ENCODE measurements at regions of chr11 and their contacts with region 1.

Region 1: GRCh38 chr11:123741159-123742028 is at the start of gene ZNF202:
- DNase-seq: peak; percentile 91
- H3K4me3 ChIP-seq: peak within 1 kb of the TSS; percentile 58 to 89 (median 64)
- H3K27ac ChIP-seq: peak within 1 kb of the TSS; percentile 10
- H3K4me1 ChIP-seq: peaks cover 14% of the 10 kb centered on the region
- H3K27me3 ChIP-seq: peaks cover 0 to under 1% of the 10 kb centered on the region in 2 experiments
- CTCF ChIP-seq: peak in 1 of 2 donors; percentile 0
- POLR2A ChIP-seq: peak; percentile 81
- total RNA-seq, gene ZNF202: 12.3 and 13.1 TPM in 2 replicates

Region 2: DNA sequence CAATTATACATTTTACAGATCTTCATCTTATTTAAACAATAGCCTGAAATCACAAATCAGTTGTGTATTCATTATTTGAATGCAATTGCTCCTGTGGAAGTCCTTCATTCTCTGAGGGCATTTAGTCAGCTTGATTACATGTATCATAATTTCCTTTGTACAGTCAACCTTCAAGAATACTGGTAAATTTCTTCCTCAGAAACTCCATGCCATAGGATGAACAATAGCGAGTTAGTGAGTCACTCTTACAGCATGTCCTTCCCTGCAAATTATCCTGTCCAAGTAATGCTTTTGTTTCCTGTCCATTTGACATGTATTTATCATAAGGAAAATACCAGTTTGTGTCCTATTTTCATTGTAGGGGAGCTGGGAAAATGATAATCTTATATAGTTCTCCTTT is 232.4 kb after region 1 on chr11:
- CTCF ChIA-PET with region 1: no interaction called
- POLR2A ChIA-PET with region 1: no interaction called
- dilution Hi-C with region 1: no loop called
- intact Hi-C with region 1: loop called (anchors 2 kb)
- DNase-seq: peak; percentile 96
- H3K4me3 ChIP-seq: no peak overlapping the region
- H3K27ac ChIP-seq: peak overlapping the region; percentile 93
- H3K4me1 ChIP-seq: peaks cover 24% of the 10 kb centered on the region
- H3K27me3 ChIP-seq: no peaks in the 10 kb centered on the region
- CTCF ChIP-seq: no peak
- POLR2A ChIP-seq: peak; percentile 54

Region 3: DNA sequence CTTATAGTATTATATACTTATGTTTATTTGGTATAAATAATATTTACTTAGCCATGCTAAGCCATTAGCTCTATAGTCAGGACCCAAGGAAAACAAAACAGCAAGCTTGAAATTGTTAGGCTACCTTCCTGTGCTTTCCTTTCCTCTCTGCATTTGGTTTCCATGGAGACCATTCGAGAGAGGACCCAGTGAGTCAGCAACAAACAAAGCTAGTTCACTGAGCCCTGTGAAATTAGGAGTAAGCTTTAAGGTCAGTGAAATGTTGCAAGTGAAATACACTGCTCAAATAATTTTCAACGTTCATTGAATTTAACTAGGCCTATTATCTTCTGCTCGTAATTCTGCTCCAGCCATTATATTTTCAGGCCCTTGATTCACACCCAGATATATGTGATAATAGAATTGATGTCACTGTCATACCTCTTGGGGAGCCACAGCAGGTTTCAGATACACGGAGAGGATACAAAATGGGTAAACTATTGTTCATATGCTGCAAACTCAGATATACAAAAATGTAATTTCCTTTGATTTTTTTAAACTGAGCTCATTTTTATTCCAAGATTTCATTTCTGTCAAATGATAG is 432.7 kb after region 1 on chr11:
- CTCF ChIA-PET with region 1: no interaction called
- POLR2A ChIA-PET with region 1: no interaction called
- dilution Hi-C with region 1: no loop called
- intact Hi-C with region 1: loop called (anchors 5 kb)
- DNase-seq: peak; percentile 83
- H3K4me3 ChIP-seq: no peak overlapping the region
- H3K27ac ChIP-seq: no peak overlapping the region
- H3K4me1 ChIP-seq: peaks cover 5% of the 10 kb centered on the region
- H3K27me3 ChIP-seq: no peaks in the 10 kb centered on the region
- CTCF ChIP-seq: no peak
- POLR2A ChIP-seq: no peak